ENCODE measurements at regions of chr13 and their contacts with region 1.

Region 1: DNA sequence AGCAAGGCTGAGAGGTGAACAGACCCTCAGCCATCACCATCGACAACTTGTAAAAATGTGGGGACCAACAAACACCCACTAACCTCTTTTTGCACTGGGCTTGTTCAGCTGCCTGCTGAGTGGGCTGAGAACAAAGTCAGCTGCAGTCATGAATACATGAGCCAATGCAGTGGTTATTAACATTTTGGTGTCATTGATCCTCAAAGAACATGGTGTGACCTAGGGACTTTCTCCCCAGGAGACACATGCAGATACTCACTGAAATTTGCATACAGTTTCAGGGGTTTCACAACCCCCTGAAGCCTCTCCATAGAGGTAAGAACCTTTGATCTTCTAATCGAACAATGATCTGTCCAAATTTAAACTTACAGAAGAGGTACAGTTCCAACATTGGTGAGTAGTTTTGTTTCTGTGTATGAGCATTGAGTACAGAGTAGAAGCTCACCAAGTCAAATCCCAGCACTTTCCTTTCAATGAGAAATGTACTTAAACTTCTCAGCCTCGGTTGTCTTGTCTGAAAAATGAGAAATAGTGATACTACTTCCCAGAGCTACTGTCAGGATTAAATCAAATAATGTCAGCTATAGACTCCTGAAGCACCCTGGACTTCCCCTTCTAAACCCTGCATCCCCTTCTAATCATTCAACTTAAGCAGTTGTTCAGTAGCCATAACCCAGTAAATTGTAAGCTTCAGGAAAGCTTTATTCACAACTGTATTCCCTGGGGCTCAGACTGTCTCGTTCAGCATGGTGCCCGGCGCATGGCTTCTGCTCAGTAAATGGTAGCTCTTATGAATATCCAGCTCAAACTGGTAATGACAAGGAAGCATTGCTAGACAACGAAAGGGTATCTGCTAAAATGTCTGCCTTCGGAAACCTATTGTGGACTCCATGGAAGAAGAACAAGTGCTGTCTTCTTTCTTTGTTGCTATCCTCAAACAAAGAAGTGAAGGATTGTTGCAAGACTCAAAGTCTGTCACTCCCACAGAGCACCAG is 148.7 kb downstream of the FOXO1 start:
- DNase-seq: peak; percentile 82
- ATAC-seq: peak; percentile 85
- H3K4me3 ChIP-seq: peak overlapping the region; percentile 33; the same call in 1 of the 2 replicates
- H3K27ac ChIP-seq: peak overlapping the region; percentile 66
- H3K4me1 ChIP-seq: peaks cover 30% of the 10 kb centered on the region
- H3K27me3 ChIP-seq: no peaks in the 10 kb centered on the region
- CTCF ChIP-seq: no peak
- EP300 ChIP-seq: peak; percentile 49 to 82; a peak in 2 of 4 replicates
- POLR2A ChIP-seq: no peak
- RAD21 ChIP-seq: no peak

Region 2: DNA sequence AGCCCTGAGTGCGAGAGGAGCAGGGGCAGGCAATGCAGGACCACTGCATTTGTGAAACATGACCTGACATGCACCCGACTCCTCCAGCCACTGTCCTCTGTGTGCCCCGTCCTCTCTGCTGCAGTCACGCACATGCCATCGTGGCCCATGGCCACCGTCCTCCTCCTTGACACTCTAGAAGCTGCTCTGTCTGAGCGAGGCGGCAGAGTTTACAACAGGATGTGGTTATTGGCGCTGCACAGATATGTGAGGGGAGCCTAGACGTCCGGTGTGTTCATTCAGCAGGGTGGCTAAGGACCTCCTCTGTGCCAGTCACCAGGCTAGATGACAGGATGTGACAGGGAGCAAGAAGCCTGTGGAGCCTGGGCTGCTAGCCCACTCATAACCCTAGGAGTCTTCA is 129.2 kb before region 1 on chr13:
- CTCF ChIA-PET with region 1: no interaction called
- POLR2A ChIA-PET with region 1: interaction called, 3 read pairs
- RAD21 ChIA-PET with region 1: no interaction called
- SMC1A ChIA-PET with region 1: no interaction called
- in situ Hi-C with region 1: no loop called
- intact Hi-C with region 1: loop called (anchors 5 kb)
- DNase-seq: peak; percentile 70
- ATAC-seq: peak; percentile 97
- H3K4me3 ChIP-seq: peak overlapping the region; percentile 55; the same call in 1 of the 2 replicates
- H3K27ac ChIP-seq: peak overlapping the region; percentile 23
- H3K4me1 ChIP-seq: peaks cover 11% of the 10 kb centered on the region
- H3K27me3 ChIP-seq: no peaks in the 10 kb centered on the region
- CTCF ChIP-seq: no peak
- EP300 ChIP-seq: no peak
- POLR2A ChIP-seq: peak; percentile 69
- RAD21 ChIP-seq: no peak

Region 3: GRCh38 chr13:40445557-40445990 is 72.2 kb before region 1 on chr13:
- CTCF ChIA-PET with region 1: no interaction called
- POLR2A ChIA-PET with region 1: no interaction called
- RAD21 ChIA-PET with region 1: interaction called, 10 read pairs
- SMC1A ChIA-PET with region 1: interaction called, 11 read pairs
- in situ Hi-C with region 1: no loop called
- intact Hi-C with region 1: loop called (anchors 1 kb)
- DNase-seq: peak; percentile 99
- ATAC-seq: peak; percentile 99
- H3K4me3 ChIP-seq: no peak overlapping the region
- H3K27ac ChIP-seq: peak overlapping the region; percentile 42
- H3K4me1 ChIP-seq: peaks cover 13% of the 10 kb centered on the region
- H3K27me3 ChIP-seq: no peaks in the 10 kb centered on the region
- CTCF ChIP-seq: no peak
- EP300 ChIP-seq: peak; percentile 100
- POLR2A ChIP-seq: no peak
- RAD21 ChIP-seq: peak; percentile 35; the same call in 1 of the 2 replicates

Region 4: DNA sequence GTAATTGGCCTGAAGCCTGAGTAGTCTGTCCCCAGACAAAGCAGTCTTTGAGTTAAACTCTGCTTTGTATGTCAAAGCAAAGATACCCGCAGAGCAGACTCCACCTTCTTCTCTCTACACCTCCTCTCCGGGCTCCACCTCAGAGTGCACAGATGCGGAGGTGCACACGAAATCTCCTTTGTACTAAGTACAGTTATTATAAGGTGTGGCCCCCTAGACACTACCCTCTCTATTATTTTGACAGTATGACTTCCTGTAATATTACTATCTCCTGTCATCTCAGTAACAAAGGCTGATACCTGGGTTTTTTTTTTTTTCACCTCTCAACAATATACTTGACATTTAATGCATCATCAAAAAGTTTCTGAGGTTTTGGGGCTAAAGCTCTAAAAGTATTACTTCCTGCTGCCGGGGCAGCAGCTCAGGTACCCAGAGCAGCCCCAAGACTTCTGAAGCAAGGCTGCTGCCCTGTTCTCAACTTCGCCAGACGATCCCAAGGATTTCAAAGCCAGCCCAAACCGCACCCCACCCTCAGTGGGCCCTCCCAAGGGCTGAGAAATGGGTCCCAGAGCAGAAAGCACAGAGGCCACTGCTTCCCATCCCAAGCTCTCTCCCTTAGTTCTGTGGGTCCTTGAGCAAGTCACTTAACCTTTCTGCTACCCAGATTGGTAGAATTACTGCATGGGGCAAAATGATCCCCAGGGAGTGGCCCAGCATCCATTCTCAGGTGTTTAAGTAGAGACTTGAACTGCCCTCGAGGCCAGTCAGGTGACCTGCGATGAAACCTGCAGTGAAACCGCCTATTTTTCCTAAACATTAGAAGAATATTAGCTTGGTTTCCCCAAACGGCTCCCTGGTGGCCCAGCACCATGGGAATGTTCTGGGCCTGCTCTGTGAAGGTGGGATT is 31.9 kb before region 1 on chr13:
- CTCF ChIA-PET with region 1: interaction called, 3 read pairs
- POLR2A ChIA-PET with region 1: no interaction called
- RAD21 ChIA-PET with region 1: interaction called, 5 read pairs
- SMC1A ChIA-PET with region 1: interaction called, 10 read pairs
- in situ Hi-C with region 1: no loop called
- intact Hi-C with region 1: loop called (anchors 2 kb)
- DNase-seq: no peak
- ATAC-seq: peak; percentile 86
- H3K4me3 ChIP-seq: no peak overlapping the region
- H3K27ac ChIP-seq: no peak overlapping the region
- H3K4me1 ChIP-seq: peaks cover 19% of the 10 kb centered on the region
- H3K27me3 ChIP-seq: no peaks in the 10 kb centered on the region; a peak in 1 of 4 replicates
- CTCF ChIP-seq: no peak
- EP300 ChIP-seq: peak in 1 of 2 experiments; percentile 36; a peak in 1 of 4 replicates
- POLR2A ChIP-seq: no peak
- RAD21 ChIP-seq: no peak

Region 5: GRCh38 chr13:40589285-40590109 is 71.7 kb after region 1 on chr13:
- CTCF ChIA-PET with region 1: no interaction called
- POLR2A ChIA-PET with region 1: no interaction called
- RAD21 ChIA-PET with region 1: interaction called, 3 read pairs
- SMC1A ChIA-PET with region 1: no interaction called
- in situ Hi-C with region 1: no loop called
- intact Hi-C with region 1: loop called (anchors 2 kb)
- DNase-seq: peak; percentile 88
- ATAC-seq: peak; percentile 95
- H3K4me3 ChIP-seq: 0 out of 2 replicates have a peak overlapping the region, but pooled peaks have one; percentile 13
- H3K27ac ChIP-seq: peak overlapping the region; percentile 63
- H3K4me1 ChIP-seq: peaks cover 40% of the 10 kb centered on the region
- H3K27me3 ChIP-seq: no peaks in the 10 kb centered on the region
- CTCF ChIP-seq: no peak
- EP300 ChIP-seq: peak; percentile 33 to 79; a peak in 3 of 4 replicates
- POLR2A ChIP-seq: no peak
- RAD21 ChIP-seq: no peak

Region 6: GRCh38 chr13:40653527-40654318 is 135.9 kb after region 1 on chr13:
- CTCF ChIA-PET with region 1: no interaction called
- POLR2A ChIA-PET with region 1: no interaction called
- RAD21 ChIA-PET with region 1: interaction called, 10 read pairs
- SMC1A ChIA-PET with region 1: no interaction called
- in situ Hi-C with region 1: no loop called
- intact Hi-C with region 1: no loop called
- DNase-seq: no peak
- ATAC-seq: peak; percentile 58
- H3K4me3 ChIP-seq: peak overlapping the region; percentile 33
- H3K27ac ChIP-seq: peak overlapping the region; percentile 83
- H3K4me1 ChIP-seq: peaks cover 36% of the 10 kb centered on the region
- H3K27me3 ChIP-seq: no peaks in the 10 kb centered on the region
- CTCF ChIP-seq: no peak
- EP300 ChIP-seq: no peak
- POLR2A ChIP-seq: no peak
- RAD21 ChIP-seq: no peak

Region 7: DNA sequence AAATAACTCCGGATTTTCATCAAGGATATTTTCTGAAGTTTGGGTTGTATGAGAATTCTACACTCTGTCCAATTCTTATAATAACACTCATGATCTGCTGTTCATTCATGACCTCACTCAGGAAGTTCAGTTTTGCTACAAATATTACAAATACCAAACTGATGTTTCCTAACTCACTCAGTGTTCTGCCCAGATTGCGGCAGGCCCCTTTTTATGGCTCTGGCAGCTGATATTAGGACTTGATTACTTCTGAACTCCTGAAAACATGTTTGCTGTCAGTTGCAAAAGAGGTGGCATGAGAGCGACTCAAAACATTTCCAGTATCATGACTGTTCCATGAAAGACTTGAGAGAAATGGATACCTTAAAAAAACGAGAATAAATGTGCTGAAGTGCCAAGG is 1127.5 kb after region 1 on chr13:
- CTCF ChIA-PET with region 1: no interaction called
- POLR2A ChIA-PET with region 1: no interaction called
- RAD21 ChIA-PET with region 1: no interaction called
- SMC1A ChIA-PET with region 1: no interaction called
- in situ Hi-C with region 1: no loop called
- intact Hi-C with region 1: no loop called
- DNase-seq: no peak
- ATAC-seq: no peak
- H3K4me3 ChIP-seq: no peak overlapping the region
- H3K27ac ChIP-seq: no peak overlapping the region
- H3K4me1 ChIP-seq: no peaks in the 10 kb centered on the region
- H3K27me3 ChIP-seq: no peaks in the 10 kb centered on the region
- CTCF ChIP-seq: no peak
- EP300 ChIP-seq: no peak
- POLR2A ChIP-seq: no peak
- RAD21 ChIP-seq: no peak